ENCODE measurements at regions of chr6 and their contacts with region 1.

Region 1: DNA sequence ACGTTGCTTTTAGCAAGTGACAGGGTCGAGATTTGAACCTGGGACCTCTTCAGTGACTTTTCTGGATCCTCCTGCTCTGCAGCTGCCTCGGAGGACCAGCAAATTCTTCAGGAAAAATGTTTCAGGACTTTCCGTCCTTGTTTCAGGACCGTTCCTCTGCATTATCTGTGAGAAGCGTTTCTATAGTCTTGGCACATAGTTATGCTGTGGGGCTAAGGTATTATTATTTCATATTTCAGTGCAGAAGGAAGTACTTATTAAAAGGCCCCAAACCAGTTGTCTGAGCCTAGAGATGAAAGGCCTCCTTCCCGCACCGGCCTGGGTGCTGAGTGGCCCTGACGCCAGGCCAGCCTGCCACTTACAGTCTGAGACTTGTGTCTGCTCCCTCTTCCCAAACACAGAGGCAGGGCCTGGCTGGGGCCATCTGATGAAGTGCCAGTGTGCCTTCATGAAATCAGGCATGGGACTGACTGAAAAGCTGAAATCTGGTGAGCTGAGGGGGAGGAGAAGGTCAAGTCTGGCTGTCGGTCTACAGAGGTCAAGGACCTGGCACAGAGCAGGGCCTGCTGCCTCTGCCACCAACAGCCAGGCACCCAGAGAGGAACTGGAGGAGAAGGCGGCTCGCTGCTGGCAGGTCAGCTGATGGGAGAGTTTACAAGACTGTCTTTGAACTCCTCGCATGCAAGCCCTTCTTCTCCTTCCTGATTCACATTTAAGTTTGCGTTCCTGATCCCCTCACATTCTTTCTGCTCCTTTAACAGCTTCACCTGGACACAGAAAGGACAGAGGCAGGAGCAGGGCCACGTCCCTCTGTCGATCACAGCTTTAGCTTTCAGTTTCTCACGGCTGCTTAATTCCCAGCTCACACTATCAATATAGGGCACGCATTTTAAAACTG is 8.9 kb upstream of the QKI start:
- H3K4me3 Mint-ChIP-seq: peak overlapping the region; percentile 79
- H3K27ac Mint-ChIP-seq: peak overlapping the region; percentile 99
- H3K4me1 Mint-ChIP-seq: peaks cover 69% of the 10 kb centered on the region
- H3K27me3 Mint-ChIP-seq: no peaks in the 10 kb centered on the region

Region 2: GRCh38 chr6:163383912-163384311 is 21.7 kb before region 1 on chr6:
- intact Hi-C with region 1: loop called (anchors 2 kb)
- H3K4me3 Mint-ChIP-seq: no peak overlapping the region
- H3K27ac Mint-ChIP-seq: no peak overlapping the region
- H3K4me1 Mint-ChIP-seq: peaks cover 34% of the 10 kb centered on the region
- H3K27me3 Mint-ChIP-seq: no peaks in the 10 kb centered on the region

Region 3: DNA sequence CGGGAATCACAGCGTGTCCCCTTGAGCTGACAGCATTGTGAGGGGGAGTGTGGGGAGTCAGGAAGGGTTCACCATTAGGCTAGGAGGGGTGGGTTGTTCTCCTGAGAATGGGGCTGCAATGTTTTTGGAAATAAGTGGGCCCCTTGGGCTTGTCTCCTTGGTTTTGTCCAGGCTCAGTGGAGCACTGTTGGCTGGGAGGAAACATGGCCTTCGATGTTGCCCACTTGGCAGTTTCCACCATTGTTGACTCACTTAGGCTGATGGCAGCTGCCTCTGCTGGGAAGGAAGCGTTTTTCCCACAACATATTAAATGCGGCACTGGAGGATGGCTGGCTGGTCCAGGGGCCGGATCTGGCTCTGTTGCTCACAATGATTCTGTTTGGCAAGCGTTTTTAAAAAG is 521.0 kb after region 1 on chr6:
- intact Hi-C with region 1: no loop called
- H3K4me3 Mint-ChIP-seq: no peak overlapping the region
- H3K27ac Mint-ChIP-seq: no peak overlapping the region
- H3K4me1 Mint-ChIP-seq: no peaks in the 10 kb centered on the region
- H3K27me3 Mint-ChIP-seq: peaks cover 2% of the 10 kb centered on the region